ENCODE measurements at regions of chr19 and their contacts with region 1.

Region 1: GRCh38 chr19:3163230-3163886 is 15.2 kb upstream of the S1PR4 start:
- DNase-seq: peak in 6 of 7 donors; percentile 54 to 81 (median 66)
- H3K4me3 ChIP-seq: no peak overlapping the region
- H3K27ac ChIP-seq: no peak overlapping the region
- H3K4me1 ChIP-seq: no peaks in the 10 kb centered on the region
- H3K27me3 ChIP-seq: no peaks in the 10 kb centered on the region
- CTCF ChIP-seq: peak; percentile 80 to 93 (median 90)
- POLR2A ChIP-seq: no peak

Region 2: GRCh38 chr19:2887391-2887914 is 275.9 kb before region 1 on chr19:
- intact Hi-C with region 1: loop called in 1 of 2 experiments (anchors 10 kb)
- DNase-seq: peak in 2 of 7 donors; percentile 17 to 33
- H3K4me3 ChIP-seq: no peak overlapping the region
- H3K27ac ChIP-seq: peak overlapping the region in 1 of 5 donors; percentile 37
- H3K4me1 ChIP-seq: no peaks in the 10 kb centered on the region
- H3K27me3 ChIP-seq: no peaks in the 10 kb centered on the region
- CTCF ChIP-seq: peak; percentile 43 to 69 (median 63)
- POLR2A ChIP-seq: no peak

Region 3: GRCh38 chr19:2962045-2962561 is 201.3 kb before region 1 on chr19:
- intact Hi-C with region 1: loop called in 1 of 2 experiments (anchors 5 kb)
- DNase-seq: peak in 4 of 7 donors; percentile 57 to 79 (median 76)
- H3K4me3 ChIP-seq: no peak overlapping the region
- H3K27ac ChIP-seq: no peak overlapping the region
- H3K4me1 ChIP-seq: no peaks in the 10 kb centered on the region
- H3K27me3 ChIP-seq: no peaks in the 10 kb centered on the region
- CTCF ChIP-seq: peak; percentile 54 to 98 (median 92)
- POLR2A ChIP-seq: no peak

Region 4: GRCh38 chr19:3075895-3076431 is 87.4 kb before region 1 on chr19:
- intact Hi-C with region 1: loop called (anchors 10 kb)
- DNase-seq: peak in 5 of 7 donors; percentile 45 to 74 (median 66)
- H3K4me3 ChIP-seq: no peak overlapping the region
- H3K27ac ChIP-seq: no peak overlapping the region
- H3K4me1 ChIP-seq: no peaks in the 10 kb centered on the region
- H3K27me3 ChIP-seq: no peaks in the 10 kb centered on the region
- CTCF ChIP-seq: peak; percentile 82 to 93 (median 91)
- POLR2A ChIP-seq: no peak

Region 5: DNA sequence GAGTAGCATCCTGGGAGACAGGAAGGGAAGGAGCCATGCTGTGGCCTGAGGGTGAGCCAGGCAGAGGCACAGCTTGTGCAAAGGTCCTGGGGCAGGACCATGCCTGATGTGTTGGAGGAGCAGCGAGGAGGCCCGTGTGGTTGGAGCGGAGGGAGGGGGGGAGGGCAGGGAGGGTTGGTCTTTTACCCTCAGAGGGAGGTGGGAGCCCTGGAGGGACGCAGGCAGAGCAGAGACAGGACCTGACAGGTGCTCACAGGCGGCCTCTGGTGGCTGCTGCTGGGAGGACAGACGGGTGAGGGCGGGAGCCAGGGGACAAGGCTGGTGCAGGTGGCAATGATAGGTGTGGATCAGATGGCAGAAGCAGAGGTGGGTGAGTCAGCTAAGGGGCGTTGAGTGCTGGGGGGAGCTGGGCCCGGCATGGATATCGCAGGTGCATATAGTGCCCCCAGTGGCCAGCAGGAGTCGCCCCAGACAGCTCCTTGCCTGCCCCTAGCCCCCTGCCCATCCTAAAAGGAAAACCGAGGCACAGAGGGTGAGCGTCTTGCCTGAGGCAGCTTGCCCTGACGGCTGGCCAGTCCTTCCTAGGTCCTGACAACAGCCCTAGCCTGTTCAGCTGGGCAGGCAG is 37.3 kb before region 1 on chr19:
- intact Hi-C with region 1: loop called in 1 of 2 experiments (anchors 5 kb)
- DNase-seq: peak; percentile 61 to 79 (median 71)
- H3K4me3 ChIP-seq: no peak overlapping the region
- H3K27ac ChIP-seq: no peak overlapping the region
- H3K4me1 ChIP-seq: peaks cover 0 to 8% of the 10 kb centered on the region in 2 donors
- H3K27me3 ChIP-seq: no peaks in the 10 kb centered on the region
- CTCF ChIP-seq: peak; percentile 65 to 82 (median 75)
- POLR2A ChIP-seq: no peak

Region 6: DNA sequence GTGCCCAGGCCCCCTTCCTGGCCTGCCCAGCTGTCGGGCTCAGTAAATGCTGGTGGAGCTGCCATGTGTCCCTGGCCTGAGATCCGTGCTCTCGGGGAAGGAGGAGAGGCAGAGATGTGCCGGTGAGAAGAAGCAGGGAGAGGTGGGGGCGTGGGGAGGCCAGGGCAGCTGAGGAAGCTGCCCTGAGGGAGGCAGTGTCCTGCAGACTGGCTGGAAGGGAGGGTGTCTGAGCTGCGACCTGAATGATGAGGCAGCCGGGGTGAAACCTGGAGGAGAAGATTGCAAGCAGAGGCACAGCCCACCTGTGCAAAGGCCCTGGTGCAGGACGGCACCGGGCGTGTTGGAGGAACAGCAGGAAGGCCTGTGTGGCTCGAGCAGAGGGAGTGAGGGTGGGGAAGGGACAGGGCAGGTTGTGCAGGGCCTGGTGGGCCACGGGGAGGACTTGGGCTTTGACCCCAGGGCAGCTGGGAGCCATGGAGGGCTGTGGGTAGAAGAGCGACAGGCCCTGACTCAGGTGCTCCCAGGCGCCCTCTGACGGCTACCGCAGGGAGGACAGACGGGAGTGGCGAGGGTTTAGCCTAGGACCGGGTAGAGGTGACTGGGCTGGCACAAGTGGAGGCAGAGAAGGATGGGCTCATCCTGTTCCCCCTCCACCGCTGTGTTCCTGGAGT is 47.1 kb after region 1 on chr19:
- intact Hi-C with region 1: no loop called
- DNase-seq: peak in 6 of 7 donors; percentile 43 to 76 (median 72)
- H3K4me3 ChIP-seq: no peak overlapping the region
- H3K27ac ChIP-seq: no peak overlapping the region
- H3K4me1 ChIP-seq: no peaks in the 10 kb centered on the region
- H3K27me3 ChIP-seq: no peaks in the 10 kb centered on the region
- CTCF ChIP-seq: peak; percentile 50 to 65 (median 59)
- POLR2A ChIP-seq: no peak

Region 7: GRCh38 chr19:3224346-3225168 is 61.2 kb after region 1 on chr19 and contains the start of gene CELF5:
- intact Hi-C with region 1: no loop called
- DNase-seq: peak in 5 of 7 donors; percentile 41 to 65 (median 48)
- H3K4me3 ChIP-seq: no peak within 1 kb of the TSS
- H3K27ac ChIP-seq: no peak within 1 kb of the TSS
- H3K4me1 ChIP-seq: no peaks in the 10 kb centered on the region
- H3K27me3 ChIP-seq: peaks cover 14% of the 10 kb centered on the region
- CTCF ChIP-seq: peak in 3 of 6 experiments; percentile 49 to 63 (median 60)
- POLR2A ChIP-seq: no peak
- total RNA-seq, gene CELF5: 0.08 to 1.6 (median 0.61) TPM in 5 of 9 donors, not detected in the others

Region 8: DNA sequence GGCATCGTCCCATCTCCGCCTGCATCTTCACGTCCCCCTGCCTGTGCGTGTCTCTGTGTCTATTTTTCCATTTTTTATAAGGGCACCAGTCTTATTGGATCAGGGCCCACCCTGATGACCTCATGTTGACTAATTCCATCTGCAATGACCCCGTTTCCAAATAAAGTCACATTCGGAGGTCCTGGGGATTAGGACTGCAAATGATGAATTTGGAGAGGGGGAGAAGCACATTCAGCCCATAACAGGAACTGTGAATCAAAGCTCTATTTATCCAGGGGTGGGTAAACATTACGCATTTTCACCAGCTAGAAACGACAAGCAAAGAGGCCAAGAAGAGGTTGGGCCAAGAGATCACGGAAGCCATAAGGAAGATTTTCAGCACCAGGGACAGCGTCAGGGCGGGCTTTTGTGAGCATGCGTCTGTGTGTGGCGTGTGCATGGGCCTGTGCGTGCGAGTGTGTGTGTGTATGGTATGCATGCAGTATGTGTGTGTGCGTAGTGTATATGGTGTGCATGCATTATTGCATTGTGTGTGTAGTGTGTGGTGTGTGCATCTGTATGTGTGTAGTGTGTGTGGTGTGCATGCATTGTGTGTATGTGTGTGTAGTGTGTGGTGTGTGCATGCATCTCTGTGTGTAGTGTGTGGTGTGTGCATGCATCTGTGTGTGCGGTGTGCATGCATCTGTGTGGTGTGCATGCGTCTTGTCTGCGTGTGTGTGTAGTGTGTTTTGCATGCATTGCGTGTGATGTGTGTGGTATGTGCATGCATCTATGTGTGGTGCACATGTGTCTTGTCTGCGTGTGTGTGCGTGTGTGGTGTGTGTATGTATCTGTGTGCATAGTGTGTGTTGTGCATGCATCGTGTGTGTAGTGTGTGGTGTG is 80.7 kb after region 1 on chr19:
- intact Hi-C with region 1: no loop called
- DNase-seq: peak in 5 of 7 donors; percentile 35 to 55 (median 48)
- H3K4me3 ChIP-seq: no peak overlapping the region
- H3K27ac ChIP-seq: no peak overlapping the region
- H3K4me1 ChIP-seq: no peaks in the 10 kb centered on the region
- H3K27me3 ChIP-seq: no peaks in the 10 kb centered on the region
- CTCF ChIP-seq: no peak
- POLR2A ChIP-seq: no peak

Region 9: GRCh38 chr19:3270902-3271301 is 107.5 kb after region 1 on chr19:
- intact Hi-C with region 1: no loop called
- DNase-seq: peak in 2 of 7 donors; percentile 26 to 62
- H3K4me3 ChIP-seq: no peak overlapping the region
- H3K27ac ChIP-seq: no peak overlapping the region
- H3K4me1 ChIP-seq: no peaks in the 10 kb centered on the region
- H3K27me3 ChIP-seq: peaks cover 37% of the 10 kb centered on the region
- CTCF ChIP-seq: no peak
- POLR2A ChIP-seq: no peak